WTC11 (cell line): ENCODE measurements at regions of chr1 and their contacts with region 1.

Region 1: GRCh38 chr1:44807262-44808062 is at the start of gene DYNLT4:
- DNase-seq: peak; percentile 77
- ATAC-seq: peak; percentile 70
- H3K4me3 Mint-ChIP-seq: peak within 1 kb of the TSS; percentile 19; the same call in 1 of the 2 replicates
- H3K27ac Mint-ChIP-seq: peak within 1 kb of the TSS; percentile 100
- H3K4me1 Mint-ChIP-seq: peaks cover 32% of the 10 kb centered on the region
- H3K27me3 Mint-ChIP-seq: peaks cover 6% of the 10 kb centered on the region
- CTCF ChIP-seq: no peak
- total RNA-seq, gene DYNLT4: 0.31 to 0.62 TPM (median 0.57 TPM) in 3 replicates

Region 2: GRCh38 chr1:44730741-44731512 is 76.5 kb before region 1 on chr1 and contains the start of gene RNU5D-1:
- CTCF ChIA-PET with region 1: interaction called, 12 read pairs
- POLR2A ChIA-PET with region 1: interaction called, 6 read pairs
- DNase-seq: peak; percentile 93
- ATAC-seq: peak; percentile 79
- H3K4me3 Mint-ChIP-seq: peak within 1 kb of the TSS; percentile 25
- H3K27ac Mint-ChIP-seq: peak within 1 kb of the TSS; percentile 100
- H3K4me1 Mint-ChIP-seq: peaks cover 22% of the 10 kb centered on the region
- H3K27me3 Mint-ChIP-seq: no peaks in the 10 kb centered on the region
- CTCF ChIP-seq: peak; percentile 81
- total RNA-seq, gene RNU5D-1: not detected in 3 replicates

Region 3: DNA sequence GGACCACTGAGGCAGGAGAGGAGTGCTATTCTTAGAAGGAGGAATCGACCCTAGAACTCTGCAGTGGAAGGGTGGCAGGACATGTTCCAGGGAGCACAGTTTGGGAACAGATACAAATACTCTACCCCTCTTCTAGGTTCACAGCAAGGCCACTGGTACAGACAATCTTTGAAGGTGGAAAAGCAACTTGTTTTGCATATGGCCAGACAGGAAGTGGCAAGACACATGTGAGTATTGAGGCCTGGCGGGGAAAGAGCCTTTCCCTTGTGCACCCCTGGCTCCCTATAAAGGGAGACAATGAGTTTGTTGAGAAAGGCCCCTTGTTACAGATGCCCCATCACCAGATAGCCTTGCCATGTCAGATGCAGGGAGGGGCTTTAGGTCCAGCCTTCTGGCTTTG is 50.0 kb before region 1 on chr1:
- CTCF ChIA-PET with region 1: no interaction called
- POLR2A ChIA-PET with region 1: no interaction called
- DNase-seq: no peak
- ATAC-seq: no peak
- H3K4me3 Mint-ChIP-seq: no peak overlapping the region
- H3K27ac Mint-ChIP-seq: no peak overlapping the region
- H3K4me1 Mint-ChIP-seq: no peaks in the 10 kb centered on the region
- H3K27me3 Mint-ChIP-seq: no peaks in the 10 kb centered on the region
- CTCF ChIP-seq: no peak

Region 4: GRCh38 chr1:44775078-44775929 is 32.2 kb before region 1 on chr1 and contains the start of gene RPS8:
- CTCF ChIA-PET with region 1: interaction called, 5 read pairs
- POLR2A ChIA-PET with region 1: interaction called, 10 read pairs
- DNase-seq: peak; percentile 93
- ATAC-seq: peak; percentile 88
- H3K4me3 Mint-ChIP-seq: peak within 1 kb of the TSS; percentile 87
- H3K27ac Mint-ChIP-seq: peak within 1 kb of the TSS; percentile 97
- H3K4me1 Mint-ChIP-seq: peaks cover 22% of the 10 kb centered on the region
- H3K27me3 Mint-ChIP-seq: no peaks in the 10 kb centered on the region
- CTCF ChIP-seq: no peak
- total RNA-seq, gene RPS8: 2,343 to 2,726 TPM (median 2,722 TPM) in 3 replicates

Region 5: GRCh38 chr1:44786138-44786840 is 21.2 kb before region 1 on chr1:
- CTCF ChIA-PET with region 1: interaction called, 20 read pairs
- POLR2A ChIA-PET with region 1: interaction called, 3 read pairs
- DNase-seq: peak; percentile 88
- ATAC-seq: peak; percentile 50
- H3K4me3 Mint-ChIP-seq: peak overlapping the region; percentile 70
- H3K27ac Mint-ChIP-seq: no peak overlapping the region; the same call in 1 of the 2 replicates
- H3K4me1 Mint-ChIP-seq: peaks cover 35% of the 10 kb centered on the region
- H3K27me3 Mint-ChIP-seq: peaks cover 12% of the 10 kb centered on the region
- CTCF ChIP-seq: peak; percentile 100

Region 6: DNA sequence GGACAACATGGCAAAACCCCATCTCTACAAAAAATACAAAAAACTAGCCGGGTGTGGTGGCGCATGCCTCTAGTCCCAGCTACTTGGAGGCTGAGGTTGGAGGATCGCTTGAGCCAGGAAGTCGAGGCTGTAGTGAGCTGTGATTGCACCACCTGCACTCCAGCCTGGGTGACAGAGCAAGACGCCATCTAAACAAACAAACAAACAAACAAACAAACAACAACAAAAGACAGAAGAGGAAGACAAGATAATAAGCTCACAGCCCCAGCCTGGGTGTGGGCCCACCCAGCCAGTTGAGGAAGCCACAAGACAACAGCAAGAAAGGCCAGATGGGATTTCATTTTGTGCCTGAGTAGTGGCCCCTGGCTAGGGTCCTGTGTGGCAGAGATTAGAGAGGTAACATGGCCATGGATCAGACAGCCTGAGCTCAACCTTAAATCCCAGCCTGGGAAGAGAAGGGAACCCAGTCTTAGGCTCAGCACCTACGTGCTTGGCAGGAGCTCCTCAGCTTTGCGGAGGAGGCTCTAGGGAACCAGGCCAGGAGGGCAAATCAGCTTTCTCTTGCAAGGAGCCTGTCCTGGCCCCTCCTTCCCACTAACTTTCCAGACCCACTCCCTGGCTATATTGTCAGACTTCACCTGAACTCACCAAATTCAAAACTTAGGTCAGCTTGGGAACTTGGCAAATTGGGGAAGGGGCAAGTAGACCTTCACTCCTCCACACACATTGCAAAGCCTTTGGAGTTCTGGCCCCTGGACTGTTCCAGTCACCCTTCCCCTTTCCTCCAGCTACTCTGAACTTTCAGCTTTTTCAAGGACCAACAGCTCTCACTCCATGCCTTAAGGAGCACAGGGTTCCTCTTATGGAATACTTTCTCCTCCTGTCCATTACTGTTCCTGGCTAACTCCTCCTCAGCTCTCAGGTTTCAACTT is 14.4 kb before region 1 on chr1:
- CTCF ChIA-PET with region 1: interaction called, 24 read pairs
- POLR2A ChIA-PET with region 1: interaction called, 43 read pairs
- DNase-seq: no peak
- ATAC-seq: peak; percentile 2; the same call in 1 of the 2 replicates
- H3K4me3 Mint-ChIP-seq: peak overlapping the region; percentile 20
- H3K27ac Mint-ChIP-seq: peak overlapping the region; percentile 79
- H3K4me1 Mint-ChIP-seq: peaks cover 15% of the 10 kb centered on the region
- H3K27me3 Mint-ChIP-seq: no peaks in the 10 kb centered on the region
- CTCF ChIP-seq: no peak

Region 7: DNA sequence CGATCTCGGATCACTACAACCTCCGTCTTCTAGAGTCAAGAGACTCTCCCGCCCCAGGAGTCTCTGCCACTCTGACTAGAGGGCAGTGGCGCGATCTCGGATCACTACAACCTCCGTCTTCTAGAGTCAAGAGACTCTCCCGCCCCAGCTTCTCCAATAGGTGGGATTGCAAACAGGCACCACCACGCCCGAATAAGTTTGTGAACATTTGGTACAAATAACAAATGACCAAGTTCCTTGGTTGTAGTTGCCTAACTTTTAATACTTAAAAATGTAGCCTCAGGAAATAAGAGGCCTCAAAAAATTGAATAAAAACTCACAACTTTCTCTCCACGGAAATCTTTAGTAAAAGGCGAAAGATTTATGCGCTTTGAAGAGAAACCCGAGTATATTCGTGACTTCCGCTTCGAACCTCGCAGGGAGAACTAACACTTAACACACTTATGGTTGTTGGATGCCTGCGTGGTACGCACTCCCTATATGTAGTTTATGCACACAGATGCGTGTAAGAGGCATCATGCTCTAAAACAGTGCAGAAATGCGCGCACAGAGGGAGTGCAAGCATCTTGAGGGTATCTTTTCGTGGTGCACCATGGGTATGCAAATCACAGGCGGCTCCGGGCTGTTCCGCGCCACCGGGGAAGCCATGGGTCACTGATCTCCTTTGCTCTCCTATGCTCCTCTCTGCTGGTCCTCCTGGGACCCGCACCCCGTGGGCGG is 12.3 kb after region 1 on chr1:
- CTCF ChIA-PET with region 1: interaction called, 14 read pairs
- POLR2A ChIA-PET with region 1: interaction called, 16 read pairs
- DNase-seq: peak; percentile 83
- ATAC-seq: peak; percentile 93
- H3K4me3 Mint-ChIP-seq: peak overlapping the region; percentile 81
- H3K27ac Mint-ChIP-seq: peak overlapping the region; percentile 100
- H3K4me1 Mint-ChIP-seq: peaks cover 24% of the 10 kb centered on the region
- H3K27me3 Mint-ChIP-seq: no peaks in the 10 kb centered on the region
- CTCF ChIP-seq: no peak

Region 8: DNA sequence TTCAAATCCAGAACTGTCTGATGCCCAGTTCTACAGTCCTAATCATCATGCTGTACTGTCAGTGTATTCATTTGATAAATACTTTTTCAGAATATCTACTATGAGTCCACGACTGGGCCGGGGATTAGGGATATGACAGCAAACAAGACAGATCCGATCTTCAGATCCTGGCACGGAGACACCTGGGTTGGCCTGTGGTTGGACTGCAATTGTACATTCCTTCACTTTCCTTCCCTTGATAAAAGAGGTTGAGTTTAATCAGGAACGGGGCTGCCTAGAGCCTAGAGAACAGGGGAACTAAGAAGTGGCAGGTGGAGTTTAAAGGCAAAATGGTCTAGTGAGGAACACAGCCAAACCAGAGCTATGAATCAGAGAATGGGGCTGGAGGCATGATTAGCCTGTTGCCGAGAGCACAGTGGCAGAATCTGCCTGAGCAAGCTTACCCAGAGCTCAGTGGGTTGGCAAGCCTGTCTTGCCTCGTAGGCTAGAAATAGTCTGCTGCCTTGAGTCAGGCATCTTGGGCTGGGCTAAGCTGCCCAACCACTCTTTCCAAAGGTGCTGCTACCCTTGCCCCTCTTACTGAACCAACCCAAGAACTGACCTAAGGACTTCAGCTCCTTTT is 73.7 kb after region 1 on chr1:
- CTCF ChIA-PET with region 1: no interaction called
- POLR2A ChIA-PET with region 1: no interaction called
- DNase-seq: no peak
- ATAC-seq: no peak
- H3K4me3 Mint-ChIP-seq: no peak overlapping the region
- H3K27ac Mint-ChIP-seq: peak overlapping the region; percentile 67; the same call in 1 of the 2 replicates
- H3K4me1 Mint-ChIP-seq: peaks cover 13% of the 10 kb centered on the region
- H3K27me3 Mint-ChIP-seq: no peaks in the 10 kb centered on the region; the same call in none of the 2 replicates
- CTCF ChIP-seq: no peak